Posterior cingulate gyrus (tissue), 11 donors: ENCODE measurements at regions of chr12 and their contacts with region 1.

Region 1: GRCh38 chr12:20601668-20602280 is 93.4 kb upstream of the SLCO1C1 start:
- DNase-seq: no peak

Region 2: DNA sequence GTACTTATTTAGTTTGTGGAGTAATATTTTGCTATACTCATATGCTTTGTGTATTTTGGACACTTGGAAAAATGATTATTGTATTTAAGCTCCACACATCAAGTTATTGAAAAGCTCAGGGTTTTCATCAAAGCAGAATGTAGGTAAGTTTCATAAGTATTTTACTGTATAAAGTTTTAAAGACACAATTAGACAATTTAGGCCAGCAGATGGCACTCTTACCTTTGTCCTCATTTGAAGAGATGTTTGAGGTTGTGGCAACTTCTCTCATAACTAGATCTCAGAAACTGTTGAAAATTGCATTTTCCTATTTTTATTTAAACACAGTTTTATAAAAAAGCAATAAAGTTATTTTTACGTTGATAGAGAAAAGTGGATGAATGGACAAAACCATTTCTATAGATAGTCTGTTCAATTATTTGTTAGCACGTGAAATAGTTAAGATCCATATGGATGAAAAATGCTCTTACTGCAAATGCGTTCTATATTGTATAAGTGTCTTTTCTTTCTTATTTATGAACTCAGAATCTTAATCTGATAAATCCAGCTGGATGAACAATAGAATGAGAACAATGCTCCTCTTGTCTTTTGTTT is 862.5 kb before region 1 on chr12:
- intact Hi-C with region 1: loop called (anchors 5 kb)
- DNase-seq: peak in 1 of 10 donors; percentile 11

Region 3: DNA sequence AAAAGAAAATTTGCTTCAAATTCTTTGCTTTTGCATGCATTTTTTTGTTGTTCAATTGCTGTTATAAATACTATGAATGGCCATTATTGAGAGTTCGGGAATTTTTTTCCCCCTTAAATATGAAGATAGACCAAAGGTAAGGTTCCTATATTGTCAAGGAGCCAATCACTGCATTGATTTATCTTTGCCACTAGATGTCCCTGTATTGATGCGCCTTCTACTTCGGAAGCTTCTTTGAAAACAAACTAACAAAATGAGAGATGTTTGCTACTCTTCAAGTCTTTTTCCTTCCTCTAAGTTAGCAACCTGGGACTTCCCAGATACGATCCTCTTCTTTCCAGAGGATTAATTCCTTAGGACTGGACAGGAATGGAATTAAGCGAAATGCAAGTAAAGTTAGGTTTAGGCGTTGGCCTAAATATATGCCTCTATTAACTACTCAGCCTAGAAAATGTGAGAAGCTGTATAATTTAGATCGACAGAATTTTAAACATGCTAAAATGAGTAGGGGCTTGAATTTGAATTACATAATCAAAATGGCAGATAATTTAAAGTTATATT is 844.4 kb before region 1 on chr12:
- intact Hi-C with region 1: loop called (anchors 5 kb)
- DNase-seq: no peak

Region 4: DNA sequence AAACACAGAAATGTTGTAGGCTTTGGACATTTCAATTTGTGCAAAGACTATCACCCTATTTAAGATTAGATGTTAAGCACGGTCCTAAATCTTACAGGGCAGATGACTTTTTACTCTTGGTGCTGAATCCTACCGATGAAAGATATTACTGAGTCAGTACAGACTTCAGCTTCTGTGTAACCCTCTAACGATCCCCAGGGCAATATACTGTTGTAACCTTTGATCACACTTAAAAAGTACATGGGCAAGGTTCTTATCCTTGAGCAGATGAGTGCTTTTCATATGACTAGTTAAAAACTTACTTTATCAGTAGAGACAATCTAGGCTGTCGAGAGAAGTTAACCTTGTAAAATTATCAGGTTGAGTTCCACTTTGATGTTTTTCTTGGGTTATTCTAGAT is 210.9 kb before region 1 on chr12:
- intact Hi-C with region 1: no loop called
- DNase-seq: no peak

Region 5: GRCh38 chr12:20469756-20470155 is 132.0 kb before region 1 on chr12:
- intact Hi-C with region 1: loop called (anchors 5 kb)
- DNase-seq: no peak

Region 6: DNA sequence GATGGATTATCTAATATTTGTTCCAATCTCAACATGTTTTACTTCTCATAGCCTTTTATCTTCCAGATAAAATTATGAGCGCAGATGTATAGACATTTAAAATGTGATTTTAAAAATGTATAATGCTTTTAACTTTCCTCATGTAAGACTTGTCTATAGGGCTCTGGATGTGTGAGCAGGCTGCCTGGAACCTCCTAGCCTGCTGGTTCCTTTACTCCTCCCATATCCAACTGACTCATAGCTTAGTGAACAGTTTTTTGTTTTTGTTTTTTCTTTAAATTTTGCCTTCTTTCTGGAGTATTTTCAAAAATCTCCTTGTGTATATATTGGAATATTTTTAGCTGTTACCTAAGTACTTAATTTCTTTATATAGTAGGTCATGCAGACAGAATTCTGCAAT is 118.0 kb before region 1 on chr12:
- intact Hi-C with region 1: loop called (anchors 1 kb)
- DNase-seq: no peak

Region 7: DNA sequence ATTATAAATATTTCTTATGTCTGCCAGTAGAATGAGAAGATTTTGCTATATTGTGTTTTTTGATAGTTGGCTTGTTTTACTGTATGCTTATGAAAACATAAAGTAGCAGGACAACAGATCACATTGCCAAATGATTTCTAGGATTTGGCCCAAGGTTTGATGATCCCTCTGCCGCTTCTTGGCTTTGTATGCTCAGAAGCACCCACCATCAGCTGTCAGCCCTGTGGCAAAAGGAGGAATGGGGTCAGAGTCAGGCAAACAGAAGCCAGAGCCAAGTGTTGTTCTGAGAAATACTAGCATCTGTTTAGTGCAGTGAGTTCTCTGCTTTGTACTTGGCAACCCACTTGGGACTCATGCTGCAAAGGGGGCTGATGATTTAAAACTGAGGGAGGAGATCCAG is 81.2 kb before region 1 on chr12:
- intact Hi-C with region 1: no loop called
- DNase-seq: peak in 1 of 10 donors; percentile 5